Heart left ventricle (tissue), 16 donors: ENCODE measurements at regions of chr15 and their contacts with region 1.

Region 1: GRCh38 chr15:84929744-84930371 is 45.4 kb downstream of the SLC28A1 start:
- DNase-seq: no peak
- ATAC-seq: peak in 1 of 4 donors; percentile 2
- H3K4me3 ChIP-seq: no peak overlapping the region
- H3K27ac ChIP-seq: no peak overlapping the region
- H3K4me1 ChIP-seq: peaks cover 0 to 15% (median 8%) of the 10 kb centered on the region in 12 donors
- H3K27me3 ChIP-seq: no peaks in the 10 kb centered on the region
- CTCF ChIP-seq: no peak
- POLR2A ChIP-seq: no peak

Region 2: DNA sequence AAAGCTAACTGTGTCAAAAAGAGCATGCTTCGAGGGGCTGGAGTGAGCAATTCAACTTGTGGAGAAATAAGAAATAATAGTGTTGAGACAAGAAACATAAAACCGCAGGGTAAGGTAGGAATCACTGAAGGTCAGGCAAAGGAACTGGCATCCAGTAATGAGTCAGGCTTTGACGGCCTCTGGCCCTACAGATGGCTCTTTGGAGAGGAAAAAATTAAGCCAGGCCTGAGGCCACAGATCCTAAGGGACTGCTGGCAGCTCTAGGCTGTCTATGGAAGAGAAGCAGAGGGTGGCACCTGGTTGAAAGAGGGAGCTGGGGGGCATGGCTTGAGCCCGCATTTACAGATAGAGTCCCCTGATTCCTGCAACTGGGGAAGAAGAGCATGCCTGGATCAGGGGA is 357.6 kb before region 1 on chr15:
- intact Hi-C with region 1: no loop called
- DNase-seq: no peak
- ATAC-seq: no peak
- H3K4me3 ChIP-seq: no peak overlapping the region
- H3K27ac ChIP-seq: no peak overlapping the region
- H3K4me1 ChIP-seq: peaks cover 0 to 14% (median 8%) of the 10 kb centered on the region in 12 donors
- H3K27me3 ChIP-seq: no peaks in the 10 kb centered on the region
- CTCF ChIP-seq: no peak
- POLR2A ChIP-seq: no peak

Region 3: GRCh38 chr15:84588053-84588874 is 341.6 kb before region 1 on chr15:
- intact Hi-C with region 1: loop called in 9 of 10 experiments (anchors 2 to 10 kb)
- DNase-seq: peak; percentile 84 to 92 (median 87)
- ATAC-seq: peak; percentile 98 to 99 (median 99)
- H3K4me3 ChIP-seq: peak overlapping the region in 10 of 12 donors; percentile 25 to 58 (median 44)
- H3K27ac ChIP-seq: no peak overlapping the region
- H3K4me1 ChIP-seq: peaks cover 0 to 10% (median 3%) of the 10 kb centered on the region in 12 donors
- H3K27me3 ChIP-seq: no peaks in the 10 kb centered on the region
- CTCF ChIP-seq: peak; percentile 82 to 98 (median 90)
- POLR2A ChIP-seq: no peak

Region 4: GRCh38 chr15:84600851-84601838 is 328.7 kb before region 1 on chr15 and contains the start of gene ZSCAN2:
- intact Hi-C with region 1: loop called in 4 of 10 experiments (anchors 2 to 10 kb)
- DNase-seq: peak; percentile 95 to 97 (median 96)
- ATAC-seq: peak; percentile 98 to 99 (median 99)
- H3K4me3 ChIP-seq: peak within 1 kb of the TSS; percentile 47 to 97 (median 90)
- H3K27ac ChIP-seq: peak within 1 kb of the TSS in 11 of 12 donors; percentile 45 to 83 (median 72)
- H3K4me1 ChIP-seq: peaks cover 0 to 46% (median 9%) of the 10 kb centered on the region in 12 donors
- H3K27me3 ChIP-seq: no peaks in the 10 kb centered on the region
- CTCF ChIP-seq: no peak
- POLR2A ChIP-seq: peak in 1 of 2 donors; percentile 56
- total RNA-seq, gene ZSCAN2: 4.6 to 10.6 (median 6.3) TPM

Region 5: DNA sequence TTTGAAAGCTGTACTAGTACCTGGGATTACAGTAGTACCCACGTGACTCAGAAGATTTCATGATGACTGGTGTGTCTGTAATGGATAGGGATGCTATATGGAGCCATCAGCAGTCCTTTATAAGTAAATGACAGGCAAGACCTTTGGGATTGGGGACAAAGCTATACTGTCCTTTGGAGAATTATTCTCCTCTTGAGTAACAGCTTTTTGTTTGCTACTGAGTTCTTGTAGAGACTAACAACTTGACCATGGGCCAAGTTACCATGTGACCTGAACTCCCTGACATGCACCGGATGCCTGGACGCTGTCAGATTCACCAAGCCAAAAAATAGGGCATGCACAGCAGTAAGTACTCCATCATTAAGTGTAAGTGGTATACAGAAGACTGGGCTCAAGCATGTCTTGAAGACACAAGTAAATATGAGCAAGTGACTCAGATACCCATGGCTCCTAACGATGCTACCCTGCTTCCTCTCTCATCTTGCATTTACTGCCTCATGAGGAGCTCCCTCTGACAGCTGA is 226.8 kb before region 1 on chr15:
- intact Hi-C with region 1: loop called in 1 of 10 experiments (anchors 5 kb)
- DNase-seq: peak in 4 of 5 donors; percentile 69 to 73 (median 71)
- ATAC-seq: peak; percentile 76 to 94 (median 91)
- H3K4me3 ChIP-seq: no peak overlapping the region
- H3K27ac ChIP-seq: peak overlapping the region in 7 of 12 donors; percentile 28 to 50 (median 38)
- H3K4me1 ChIP-seq: peaks cover 3 to 60% (median 17%) of the 10 kb centered on the region in 12 donors
- H3K27me3 ChIP-seq: no peaks in the 10 kb centered on the region
- CTCF ChIP-seq: no peak
- POLR2A ChIP-seq: no peak

Region 6: DNA sequence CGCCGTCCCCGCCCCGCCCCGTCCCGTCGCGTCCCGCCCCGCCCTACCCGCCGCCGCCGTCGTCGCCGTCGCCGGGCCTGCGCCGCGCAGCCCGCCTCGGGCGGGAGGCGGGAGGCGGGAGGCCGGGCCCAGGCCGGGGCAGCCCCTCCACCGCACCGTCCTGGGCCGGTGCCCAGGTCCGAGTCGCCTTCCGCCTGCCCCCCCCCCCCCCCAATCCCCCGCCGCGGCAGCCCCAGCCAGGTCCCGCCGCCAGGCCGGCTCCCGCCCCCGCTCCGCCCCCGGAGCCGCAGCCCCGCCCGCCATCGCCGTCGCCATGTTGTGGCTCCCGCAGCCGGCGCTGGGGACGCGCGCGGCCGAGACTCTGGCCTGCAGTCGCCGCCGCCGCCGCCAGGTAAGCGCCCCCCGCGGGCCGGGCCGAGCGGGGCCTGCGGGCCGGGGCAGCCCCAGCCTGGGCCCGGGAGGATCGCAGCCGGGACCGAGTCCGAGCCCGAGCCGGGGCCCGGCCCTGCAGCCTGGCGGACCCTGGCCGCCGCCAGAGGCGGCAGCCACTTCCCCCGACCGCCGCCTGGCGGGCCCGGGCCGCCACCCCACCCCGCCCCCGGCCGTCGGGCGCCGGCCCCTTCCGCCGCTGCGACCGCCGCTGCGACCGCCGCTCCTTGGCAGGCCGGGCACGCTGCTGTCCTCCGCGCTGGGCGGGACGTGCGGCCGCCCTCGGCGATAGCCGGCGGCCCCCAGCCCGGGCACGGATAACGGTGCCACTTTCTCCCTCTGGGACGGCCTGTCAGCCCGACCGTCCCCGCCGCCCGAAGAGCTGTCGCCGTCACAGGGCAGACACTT is 181.4 kb before region 1 on chr15 and contains the start of gene ZNF592:
- intact Hi-C with region 1: loop called in 1 of 10 experiments (anchors 1 kb)
- DNase-seq: peak; percentile 89 to 93 (median 91)
- ATAC-seq: peak; percentile 72 to 88 (median 78)
- H3K4me3 ChIP-seq: peak within 1 kb of the TSS; percentile 64 to 97 (median 94)
- H3K27ac ChIP-seq: peak within 1 kb of the TSS; percentile 99 to 100 (median 100)
- H3K4me1 ChIP-seq: peaks cover 13 to 72% (median 52%) of the 10 kb centered on the region in 12 donors
- H3K27me3 ChIP-seq: no peaks in the 10 kb centered on the region
- CTCF ChIP-seq: peak in 5 of 12 donors; percentile 13 to 62 (median 35)
- POLR2A ChIP-seq: no peak
- total RNA-seq, gene ZNF592: 16.8 to 28.6 (median 21.4) TPM

Region 7: GRCh38 chr15:84863565-84864443 is 66.1 kb before region 1 on chr15:
- intact Hi-C with region 1: loop called in 8 of 10 experiments (anchors 1 to 5 kb)
- DNase-seq: peak in 1 of 5 donors; percentile 47
- ATAC-seq: peak; percentile 24 to 40 (median 34)
- H3K4me3 ChIP-seq: peak overlapping the region in 6 of 12 donors; percentile 0 to 32 (median 17)
- H3K27ac ChIP-seq: peak overlapping the region in 11 of 12 donors; percentile 30 to 81 (median 52)
- H3K4me1 ChIP-seq: peaks cover 0 to 37% (median 20%) of the 10 kb centered on the region in 12 donors
- H3K27me3 ChIP-seq: no peaks in the 10 kb centered on the region
- CTCF ChIP-seq: peak in 10 of 12 donors; percentile 26 to 56 (median 42)
- POLR2A ChIP-seq: no peak